ENCODE measurements at regions of chr13 and their contacts with region 1.

Region 1: GRCh38 chr13:43804461-43805070 is 17.8 kb upstream of the ENOX1 start:
- DNase-seq: peak in 1 of 2 donors; percentile 47
- ATAC-seq: peak in 1 of 8 donors; percentile 55
- H3K4me3 ChIP-seq: no peak overlapping the region
- H3K27ac ChIP-seq: peak overlapping the region in 1 of 10 donors; percentile 27
- H3K4me1 ChIP-seq: peaks cover 0 to 7% (median 0%) of the 10 kb centered on the region in 9 donors
- H3K27me3 ChIP-seq: no peaks in the 10 kb centered on the region
- CTCF ChIP-seq: peak; percentile 35 to 76 (median 65)

Region 2: GRCh38 chr13:42594970-42595571 is 1209.5 kb before region 1 on chr13:
- intact Hi-C with region 1: loop called in 6 of 10 experiments (anchors 5 to 10 kb)
- DNase-seq: peak in 1 of 2 donors; percentile 42
- ATAC-seq: peak in 2 of 8 donors; percentile 58 to 70
- H3K4me3 ChIP-seq: no peak overlapping the region
- H3K27ac ChIP-seq: no peak overlapping the region
- H3K4me1 ChIP-seq: peaks cover 0 to 9% (median 0%) of the 10 kb centered on the region in 9 donors
- H3K27me3 ChIP-seq: peaks cover 0 to 35% (median 11%) of the 10 kb centered on the region in 7 donors
- CTCF ChIP-seq: peak; percentile 73 to 90 (median 84)

Region 3: DNA sequence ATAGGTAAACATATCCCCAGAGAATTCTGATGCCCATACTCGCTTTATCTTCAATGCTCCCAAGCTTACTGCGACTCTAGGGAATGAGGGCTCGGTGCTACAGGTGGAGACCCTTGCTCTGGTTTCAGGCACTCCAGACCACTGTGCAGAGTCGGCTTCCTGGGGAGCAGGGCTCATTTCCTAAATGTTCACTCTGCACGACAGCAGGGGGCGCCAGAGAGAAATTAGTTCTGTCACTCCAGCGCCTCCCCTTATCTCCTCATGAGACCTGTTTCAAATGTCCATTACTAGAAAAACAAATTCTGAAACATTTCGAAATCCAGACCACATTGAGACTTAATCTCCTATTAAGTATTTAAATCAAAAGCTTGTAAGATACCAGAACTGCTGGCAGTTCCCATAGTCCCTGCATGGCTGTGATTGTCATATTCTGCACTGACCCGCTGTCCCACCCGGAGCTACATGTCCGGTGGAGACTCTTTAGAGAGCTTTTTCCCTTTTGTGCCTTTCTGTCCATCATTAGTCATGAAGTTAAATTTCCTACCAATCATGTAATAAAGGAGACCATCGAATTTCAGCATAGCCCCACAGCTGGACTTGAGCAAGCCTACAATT is 834.9 kb before region 1 on chr13:
- intact Hi-C with region 1: loop called in 6 of 10 experiments (anchors 5 to 10 kb)
- DNase-seq: peak; percentile 79 to 83
- ATAC-seq: peak; percentile 77 to 96 (median 90)
- H3K4me3 ChIP-seq: no peak overlapping the region
- H3K27ac ChIP-seq: no peak overlapping the region
- H3K4me1 ChIP-seq: peaks cover 0 to 33% (median 20%) of the 10 kb centered on the region in 9 donors
- H3K27me3 ChIP-seq: no peaks in the 10 kb centered on the region
- CTCF ChIP-seq: peak; percentile 70 to 89 (median 84)

Region 4: GRCh38 chr13:43085545-43085944 is 719.0 kb before region 1 on chr13:
- intact Hi-C with region 1: loop called in 8 of 10 experiments (anchors 2 to 10 kb)
- DNase-seq: no peak
- ATAC-seq: no peak
- H3K4me3 ChIP-seq: no peak overlapping the region
- H3K27ac ChIP-seq: no peak overlapping the region
- H3K4me1 ChIP-seq: peaks cover 0 to 17% (median 7%) of the 10 kb centered on the region in 9 donors
- H3K27me3 ChIP-seq: no peaks in the 10 kb centered on the region
- CTCF ChIP-seq: peak; percentile 46 to 77 (median 68)

Region 5: GRCh38 chr13:43303033-43303729 is 501.4 kb before region 1 on chr13:
- intact Hi-C with region 1: loop called in 7 of 10 experiments (anchors 1 to 10 kb)
- DNase-seq: peak; percentile 57 to 63
- ATAC-seq: peak; percentile 77 to 92 (median 86)
- H3K4me3 ChIP-seq: no peak overlapping the region
- H3K27ac ChIP-seq: peak overlapping the region in 4 of 10 donors; percentile 17 to 56 (median 48)
- H3K4me1 ChIP-seq: peaks cover 0 to 34% (median 18%) of the 10 kb centered on the region in 9 donors
- H3K27me3 ChIP-seq: no peaks in the 10 kb centered on the region
- CTCF ChIP-seq: peak; percentile 31 to 76 (median 59)

Measured in heart right ventricle (tissue), 16 donors.